Endothelial cell of umbilical vein (primary cell): ENCODE measurements at regions of chr18 and their contacts with region 1.

Region 1: GRCh38 chr18:36284671-36285295 is 12.7 kb upstream of the FHOD3 start:
- DNase-seq: peak; percentile 71
- H3K4me3 ChIP-seq: no peak overlapping the region
- H3K27ac ChIP-seq: no peak overlapping the region
- H3K4me1 ChIP-seq: no peaks in the 10 kb centered on the region
- H3K27me3 ChIP-seq: peaks cover 6 to 19% of the 10 kb centered on the region in 2 experiments
- CTCF ChIP-seq: peak; percentile 63 to 65
- POLR2A ChIP-seq: no peak

Region 2: DNA sequence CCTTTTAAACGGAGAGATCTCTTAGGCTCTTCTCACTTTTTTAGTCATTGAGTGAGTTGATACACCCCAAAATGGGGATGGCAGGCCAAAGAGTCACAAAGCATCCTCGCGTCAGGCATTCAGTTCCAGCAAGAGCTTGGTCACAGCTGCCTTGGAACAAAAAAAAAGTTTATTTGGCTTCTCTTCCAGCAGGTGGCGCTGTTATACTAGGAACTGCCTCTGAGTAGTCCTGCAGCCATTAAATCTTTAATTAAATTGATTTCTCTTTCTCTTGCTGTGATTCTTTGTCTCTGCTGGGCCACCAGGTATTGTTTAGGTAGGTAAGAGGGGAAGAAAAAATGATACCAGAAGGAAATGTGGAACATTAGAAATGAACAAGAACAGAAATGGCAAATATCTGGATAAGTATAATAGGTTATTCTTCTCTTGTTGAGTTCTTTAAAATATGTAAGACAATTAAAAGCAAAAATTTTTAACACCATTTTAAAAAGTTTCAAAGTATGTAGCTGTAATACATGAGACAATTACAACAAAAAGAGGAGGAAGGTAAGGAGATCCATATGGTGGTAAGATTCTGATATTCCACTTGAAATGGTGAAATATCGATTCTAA is 528.2 kb before region 1 on chr18:
- CTCF ChIA-PET with region 1: interaction called, 22 read pairs
- POLR2A ChIA-PET with region 1: no interaction called
- dilution Hi-C with region 1: no loop called
- intact Hi-C with region 1: loop called (anchors 10 kb)
- DNase-seq: peak; percentile 63
- H3K4me3 ChIP-seq: no peak overlapping the region
- H3K27ac ChIP-seq: no peak overlapping the region
- H3K4me1 ChIP-seq: no peaks in the 10 kb centered on the region
- H3K27me3 ChIP-seq: peaks cover 3 to 6% of the 10 kb centered on the region in 2 experiments
- CTCF ChIP-seq: peak; percentile 58 to 75
- POLR2A ChIP-seq: no peak

Region 3: GRCh38 chr18:36086186-36086585 is 198.6 kb before region 1 on chr18:
- CTCF ChIA-PET with region 1: interaction called, 13 read pairs
- POLR2A ChIA-PET with region 1: no interaction called
- dilution Hi-C with region 1: no loop called
- intact Hi-C with region 1: no loop called
- DNase-seq: no peak
- H3K4me3 ChIP-seq: no peak overlapping the region
- H3K27ac ChIP-seq: no peak overlapping the region
- H3K4me1 ChIP-seq: no peaks in the 10 kb centered on the region
- H3K27me3 ChIP-seq: peaks cover 0 to 3% of the 10 kb centered on the region in 2 experiments
- CTCF ChIP-seq: no peak
- POLR2A ChIP-seq: no peak

Region 4: DNA sequence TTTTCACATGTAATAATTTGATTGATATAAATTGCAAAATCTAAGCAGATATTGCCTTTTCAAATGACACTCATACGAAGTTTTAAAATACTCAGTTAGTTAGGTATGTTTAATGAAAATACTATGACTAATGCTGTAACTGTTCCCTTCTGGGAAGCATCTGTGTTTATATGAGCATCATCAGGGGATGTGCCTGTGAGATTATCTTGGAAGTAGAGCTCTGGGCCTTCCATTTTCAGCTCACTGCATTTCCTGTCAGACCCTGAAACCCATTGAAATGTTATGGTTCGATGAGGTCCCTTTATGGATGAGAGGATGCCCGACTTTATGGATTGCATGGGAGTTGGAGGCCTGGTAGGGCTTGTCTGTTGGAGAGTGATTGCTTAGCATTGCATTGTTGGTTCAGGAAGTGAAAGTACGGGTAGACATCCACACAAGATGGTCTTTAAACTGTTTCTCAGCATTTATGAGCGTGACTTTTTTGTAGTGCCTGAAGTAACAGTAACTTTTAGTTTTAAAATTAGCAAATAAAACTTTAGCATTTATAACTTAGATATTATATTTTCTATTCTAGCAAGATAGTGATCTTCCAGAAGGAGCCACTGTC is 126.4 kb before region 1 on chr18:
- CTCF ChIA-PET with region 1: interaction called, 13 read pairs
- POLR2A ChIA-PET with region 1: no interaction called
- dilution Hi-C with region 1: no loop called
- intact Hi-C with region 1: no loop called
- DNase-seq: peak; percentile 93
- H3K4me3 ChIP-seq: no peak overlapping the region
- H3K27ac ChIP-seq: peak overlapping the region; percentile 74
- H3K4me1 ChIP-seq: peaks cover 34% of the 10 kb centered on the region
- H3K27me3 ChIP-seq: no peaks in the 10 kb centered on the region
- CTCF ChIP-seq: no peak
- POLR2A ChIP-seq: peak; percentile 49

Region 5: DNA sequence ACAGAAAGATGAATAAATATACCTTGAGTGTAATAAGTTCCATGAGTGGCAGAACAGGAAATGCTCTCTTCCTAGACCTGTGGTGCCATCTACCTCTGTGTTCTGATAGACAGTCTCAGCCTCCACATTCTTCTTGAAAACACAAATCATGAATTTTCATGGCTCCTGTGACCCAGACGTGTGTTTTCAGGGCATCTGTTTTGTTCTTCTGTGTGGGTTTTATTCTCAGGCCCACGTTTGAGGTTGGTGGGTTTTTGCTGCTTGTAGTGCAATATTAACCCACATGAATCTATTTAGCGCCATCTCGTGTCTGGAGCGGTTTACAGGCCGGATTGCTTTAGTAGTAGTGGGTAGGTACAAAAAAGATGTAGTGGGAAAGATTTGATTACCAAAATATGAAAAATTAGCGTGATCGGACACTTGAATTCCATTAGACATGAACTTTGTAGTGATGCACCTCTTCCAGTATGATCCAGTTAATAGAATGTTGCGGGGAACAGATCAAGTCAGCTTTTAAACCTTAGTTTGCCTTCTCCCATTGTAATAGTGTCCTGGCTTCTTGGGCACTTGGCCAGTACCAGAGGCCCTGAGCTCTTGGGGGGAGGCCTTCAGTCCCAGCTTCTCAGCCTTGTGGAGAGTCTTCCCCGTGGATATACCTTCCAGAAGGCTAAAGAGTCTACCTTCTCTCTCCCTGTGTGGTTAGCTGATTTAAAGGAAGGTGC is 287.5 kb after region 1 on chr18:
- CTCF ChIA-PET with region 1: interaction called, 14 read pairs
- POLR2A ChIA-PET with region 1: no interaction called
- dilution Hi-C with region 1: no loop called
- intact Hi-C with region 1: no loop called
- DNase-seq: peak; percentile 44
- H3K4me3 ChIP-seq: no peak overlapping the region
- H3K27ac ChIP-seq: no peak overlapping the region
- H3K4me1 ChIP-seq: no peaks in the 10 kb centered on the region
- H3K27me3 ChIP-seq: peaks cover 2 to 4% of the 10 kb centered on the region in 2 experiments
- CTCF ChIP-seq: peak; percentile 39 to 43
- POLR2A ChIP-seq: no peak